Dorsolateral prefrontal cortex (tissue), 120 donors: ENCODE measurements at regions of chr18 and their contacts with region 1.

Region 1: GRCh38 chr18:14949800-14950664 is 202.1 kb downstream of the ANKRD30B start:
- DNase-seq: no peak
- H3K4me3 ChIP-seq: no peak overlapping the region
- H3K27ac ChIP-seq: no peak overlapping the region
- H3K27me3 ChIP-seq: peaks cover 0 to 3% (median 0%) of the 10 kb centered on the region in 45 donors
- CTCF ChIP-seq: no peak

Region 2: GRCh38 chr18:13520306-13520705 is 1429.7 kb before region 1 on chr18:
- intact Hi-C with region 1: no loop called
- DNase-seq: peak in 2 of 10 donors; percentile 58 to 66
- H3K4me3 ChIP-seq: no peak overlapping the region
- H3K27ac ChIP-seq: peak overlapping the region in 9 of 59 donors; percentile 9 to 54 (median 40)
- H3K27me3 ChIP-seq: no peaks in the 10 kb centered on the region
- CTCF ChIP-seq: no peak

Region 3: GRCh38 chr18:14900435-14900834 is 49.6 kb before region 1 on chr18:
- intact Hi-C with region 1: loop called in 1 of 2 experiments (anchors 10 kb)
- DNase-seq: no peak
- H3K4me3 ChIP-seq: no peak overlapping the region
- H3K27ac ChIP-seq: no peak overlapping the region
- H3K27me3 ChIP-seq: peaks cover 0 to 5% (median 0%) of the 10 kb centered on the region in 45 donors
- CTCF ChIP-seq: no peak

Region 4: DNA sequence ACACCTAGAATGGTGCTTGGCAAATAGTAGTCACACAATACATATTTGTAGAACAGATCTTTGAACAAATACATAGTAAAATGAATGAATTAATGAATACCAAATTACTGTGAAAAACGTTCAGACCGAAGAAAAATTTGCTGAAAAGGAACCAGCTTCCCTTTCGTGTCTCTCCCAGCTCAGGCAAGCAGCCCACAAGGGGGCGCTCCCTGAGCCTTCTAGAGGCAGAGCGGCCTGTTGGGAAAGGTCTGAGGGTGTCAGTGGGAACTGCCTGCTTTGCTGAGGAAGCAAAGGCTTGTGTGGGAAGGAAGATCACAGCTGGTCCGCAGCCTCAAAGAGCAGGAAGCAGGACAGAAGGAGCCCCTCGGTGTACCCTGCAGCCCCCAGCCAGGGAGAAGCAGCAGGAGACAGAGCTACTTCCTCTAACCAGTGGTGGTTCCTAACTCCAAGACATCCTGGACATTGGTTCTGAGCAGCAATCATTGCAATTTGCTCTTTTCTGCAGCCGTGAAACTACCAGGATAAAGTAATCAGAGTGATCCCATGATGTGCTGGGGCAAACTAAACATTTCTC is 29.0 kb after region 1 on chr18:
- intact Hi-C with region 1: no loop called
- DNase-seq: peak in 1 of 10 donors; percentile 36
- H3K4me3 ChIP-seq: no peak overlapping the region
- H3K27ac ChIP-seq: no peak overlapping the region
- H3K27me3 ChIP-seq: peaks cover 0 to 15% (median 0%) of the 10 kb centered on the region in 45 donors
- CTCF ChIP-seq: peak in 55 of 56 donors; percentile 19 to 67 (median 49)

Region 5: DNA sequence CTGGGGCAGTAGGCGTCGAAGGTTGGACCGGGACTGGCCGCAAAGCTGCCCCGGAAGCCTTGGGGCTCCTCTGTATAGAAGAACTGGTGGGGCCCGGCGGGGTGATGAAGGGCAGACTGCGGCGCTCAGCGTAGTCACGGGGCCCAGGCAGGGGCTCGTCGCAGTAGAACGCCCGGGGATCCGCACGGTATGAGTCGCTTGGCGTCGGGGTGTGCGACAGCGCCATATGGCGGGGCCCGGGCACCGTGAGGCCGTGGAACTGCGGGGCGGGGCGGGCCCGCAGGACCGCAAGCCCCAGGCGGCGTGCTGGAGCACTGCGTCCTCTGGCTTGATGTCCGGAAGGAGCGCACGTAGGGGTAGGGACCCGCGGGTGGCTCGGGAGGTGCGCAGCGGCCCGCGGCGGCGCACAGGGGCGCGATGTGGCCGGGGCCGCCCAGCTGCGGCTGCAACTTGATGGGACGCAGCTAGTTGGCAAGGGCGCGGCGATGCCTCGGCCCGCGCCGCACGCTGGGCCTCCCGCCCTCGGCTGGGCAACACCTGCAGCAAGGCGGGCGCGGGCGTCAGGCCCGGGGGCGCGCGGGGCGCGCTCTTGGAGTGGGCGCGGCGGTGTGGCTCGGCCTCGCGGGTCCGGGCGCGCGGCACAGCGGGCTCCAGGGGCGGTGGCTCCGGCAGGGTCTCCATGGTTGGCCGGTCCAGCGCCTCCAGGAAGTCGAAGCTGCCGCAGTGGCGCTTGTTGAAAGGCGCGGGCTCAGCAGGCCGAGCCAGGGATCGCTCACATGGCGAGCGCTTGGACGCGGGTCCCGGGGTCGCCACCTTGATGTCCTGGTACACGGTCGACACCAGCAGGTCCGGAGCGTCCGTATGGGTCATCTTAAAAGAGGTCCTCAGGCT is 49.3 kb after region 1 on chr18:
- intact Hi-C with region 1: no loop called
- DNase-seq: no peak
- H3K4me3 ChIP-seq: peak overlapping the region in 15 of 59 donors; percentile 4 to 29 (median 19)
- H3K27ac ChIP-seq: no peak overlapping the region
- H3K27me3 ChIP-seq: peaks cover 0 to 18% (median 0%) of the 10 kb centered on the region in 45 donors
- CTCF ChIP-seq: no peak